BJ (cell line): ENCODE measurements at regions of chr10 and their contacts with region 1.

Region 1: DNA sequence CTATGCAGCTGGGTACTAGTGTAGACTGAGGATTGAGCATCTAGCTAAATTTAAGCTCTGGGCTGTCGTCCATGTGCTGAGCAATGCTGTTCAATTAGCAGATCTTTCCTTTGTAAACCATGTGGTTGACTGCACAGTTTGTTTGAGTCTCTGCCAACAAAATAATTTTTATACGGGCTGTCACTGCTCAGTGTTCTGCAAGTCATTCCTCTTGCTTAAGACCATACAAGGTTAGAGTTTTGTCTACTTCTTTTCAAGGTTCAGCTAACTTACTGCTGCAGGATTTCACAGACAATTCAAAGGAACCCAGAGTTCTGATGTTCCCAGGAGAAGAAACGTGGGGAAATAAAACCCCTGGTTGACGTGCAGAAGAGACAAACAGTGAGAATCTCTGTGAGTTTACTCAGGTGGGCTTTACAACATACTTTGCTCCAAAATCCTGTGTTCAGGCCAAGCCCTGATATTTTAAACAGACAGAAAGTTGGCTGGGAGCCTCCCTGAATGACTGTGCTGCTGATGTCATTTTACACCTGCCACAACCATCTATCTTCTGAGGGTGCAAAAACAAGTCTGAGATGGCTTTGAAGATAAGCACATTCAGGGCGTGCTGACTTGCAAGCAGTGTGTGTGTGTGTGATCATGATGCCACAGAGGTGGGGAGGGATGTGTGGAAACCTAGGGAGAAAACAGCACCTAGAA is 177.1 kb upstream of the SVIL start:
- DNase-seq: peak; percentile 95
- H3K4me3 ChIP-seq: no peak overlapping the region
- H3K27me3 ChIP-seq: no peaks in the 10 kb centered on the region; the same call in 1 of the 2 replicates
- CTCF ChIP-seq: no peak

Region 2: DNA sequence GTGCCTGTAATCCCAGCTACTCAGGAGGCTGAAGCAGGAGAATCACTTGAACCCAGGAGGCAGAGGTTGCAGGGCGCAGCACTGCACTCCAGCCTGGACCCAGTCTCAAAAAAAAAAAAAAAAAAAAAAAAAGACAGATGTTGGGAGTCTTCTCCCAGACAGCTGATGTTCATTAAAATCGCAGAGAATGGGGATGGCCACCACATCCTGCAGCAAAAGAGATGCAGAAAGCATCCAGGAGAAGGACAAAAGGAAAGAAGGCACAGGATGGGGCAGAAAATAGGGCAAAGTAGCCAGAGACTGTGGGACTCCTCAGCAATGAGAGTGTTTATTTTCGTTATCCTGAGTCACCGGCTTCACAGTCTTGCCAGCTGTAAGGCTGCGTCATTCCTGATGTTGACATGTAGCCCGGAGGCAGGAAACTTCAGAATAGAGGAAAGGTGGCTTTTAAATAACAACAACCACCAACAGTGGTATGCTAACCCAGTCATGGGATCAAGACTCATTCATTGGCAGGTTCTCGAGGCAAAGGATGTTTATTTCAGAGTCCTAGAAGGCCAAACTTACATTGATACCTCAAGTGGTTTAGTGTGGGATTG is 27.6 kb before region 1 on chr10:
- CTCF ChIA-PET with region 1: no interaction called
- POLR2A ChIA-PET with region 1: no interaction called
- DNase-seq: peak; percentile 100
- H3K4me3 ChIP-seq: no peak overlapping the region
- H3K27me3 ChIP-seq: no peaks in the 10 kb centered on the region
- CTCF ChIP-seq: no peak

Region 3: GRCh38 chr10:29823553-29824080 is 11.7 kb after region 1 on chr10:
- CTCF ChIA-PET with region 1: interaction called, 10 read pairs
- POLR2A ChIA-PET with region 1: interaction called, 3 read pairs
- DNase-seq: no peak
- H3K4me3 ChIP-seq: no peak overlapping the region
- H3K27me3 ChIP-seq: peaks cover 8% of the 10 kb centered on the region
- CTCF ChIP-seq: no peak